Panc1 (cell line): ENCODE measurements at regions of chrX and their contacts with region 1.

Region 1: GRCh38 chrX:44280116-44280515 is 63.4 kb downstream of the EFHC2 start:
- DNase-seq: no peak
- ATAC-seq: no peak
- H3K4me3 ChIP-seq: no peak overlapping the region
- H3K27ac ChIP-seq: no peak overlapping the region
- H3K4me1 ChIP-seq: no peaks in the 10 kb centered on the region
- H3K27me3 ChIP-seq: no peaks in the 10 kb centered on the region
- CTCF ChIP-seq: no peak

Region 2: DNA sequence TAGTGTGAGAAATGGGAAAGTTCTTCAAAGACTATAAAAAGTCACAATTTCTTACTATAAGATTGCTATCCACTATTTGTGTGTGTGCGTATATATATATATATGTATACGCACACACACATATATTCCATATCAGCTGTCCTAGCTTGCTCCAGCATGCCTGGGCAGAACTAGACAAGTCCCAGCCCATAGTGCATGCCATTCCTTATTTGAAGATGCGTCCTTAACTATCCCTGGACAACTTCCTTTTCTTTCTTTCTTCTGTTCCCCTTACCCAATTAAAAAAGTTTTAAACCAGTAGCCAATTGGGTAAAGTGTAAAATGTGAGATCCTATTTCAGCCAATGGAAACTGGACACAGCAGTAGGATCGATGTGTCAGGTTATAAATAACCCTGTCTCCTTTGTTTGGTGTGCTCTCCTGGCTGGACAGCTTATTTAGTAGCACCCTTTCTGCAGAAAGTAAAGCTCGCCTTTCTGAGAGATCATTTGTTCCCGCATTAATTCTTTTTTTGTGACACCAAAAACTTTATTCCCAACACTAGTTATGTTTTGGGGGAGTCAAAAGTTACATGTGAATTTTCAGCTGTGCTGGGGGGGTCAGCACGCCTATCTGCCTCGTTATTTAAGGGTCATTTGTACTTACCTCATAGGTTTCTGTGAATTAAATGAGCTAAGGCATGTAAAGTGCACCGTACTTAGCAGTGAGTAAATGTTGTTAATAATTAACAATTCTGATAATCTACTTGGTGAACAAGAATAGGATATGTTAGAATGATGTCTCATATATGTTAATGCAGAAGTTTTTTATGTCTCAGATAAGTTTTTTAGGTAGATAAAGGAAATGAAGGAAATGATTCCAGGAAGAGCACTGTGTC is 633.8 kb after region 1 on chrX:
- CTCF ChIA-PET with region 1: no interaction called
- POLR2A ChIA-PET with region 1: interaction called, 11 read pairs
- in situ Hi-C with region 1: no loop called
- intact Hi-C with region 1: no loop called
- DNase-seq: no peak
- ATAC-seq: no peak
- H3K4me3 ChIP-seq: no peak overlapping the region
- H3K27ac ChIP-seq: no peak overlapping the region
- H3K4me1 ChIP-seq: peaks cover 14% of the 10 kb centered on the region
- H3K27me3 ChIP-seq: no peaks in the 10 kb centered on the region
- CTCF ChIP-seq: no peak